ENCODE measurements at regions of chr11 and their contacts with region 1.

Region 1: DNA sequence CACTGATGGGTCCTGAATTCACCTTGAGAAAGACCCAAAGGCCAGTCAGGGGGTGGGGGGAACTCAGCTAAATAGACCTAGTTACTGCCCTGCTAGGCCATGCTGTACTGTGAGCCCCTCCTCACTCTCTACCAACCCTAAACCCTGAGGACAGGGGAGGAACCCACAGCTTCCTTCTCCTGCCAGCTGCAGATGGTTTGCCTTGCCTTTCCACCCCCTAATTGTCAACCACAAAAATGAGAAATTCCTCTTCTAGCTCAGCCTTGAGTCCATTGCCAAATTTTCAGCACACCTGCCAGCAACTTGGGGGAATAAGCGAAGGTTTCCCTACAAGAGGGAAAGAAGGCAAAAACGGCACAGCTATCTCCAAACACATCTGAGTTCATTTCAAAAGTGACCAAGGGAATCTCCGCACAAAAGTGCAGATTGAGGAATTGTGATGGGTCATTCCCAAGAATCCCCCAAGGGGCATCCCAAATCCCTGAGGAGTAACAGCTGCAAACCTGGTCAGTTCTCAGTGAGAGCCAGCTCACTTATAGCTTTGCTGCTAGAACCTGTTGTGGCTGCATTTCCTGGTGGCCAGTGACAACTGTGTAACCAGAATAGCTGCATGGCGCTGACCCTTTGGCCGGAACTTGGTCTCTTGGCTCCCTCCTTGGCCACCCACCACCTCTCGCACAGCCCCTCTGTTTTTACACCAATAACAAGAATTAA is 2.4 kb upstream of the TTC36 start:
- DNase-seq: peak; percentile 48 to 78 (median 74)
- H3K4me3 ChIP-seq: peak overlapping the region in 3 of 7 experiments; percentile 32 to 43 (median 38)
- H3K27ac ChIP-seq: peak overlapping the region in 1 of 2 experiments; percentile 6
- H3K4me1 ChIP-seq: peaks cover 13 to 71% (median 57%) of the 10 kb centered on the region in 4 experiments
- H3K27me3 ChIP-seq: no peaks in the 10 kb centered on the region

Region 2: DNA sequence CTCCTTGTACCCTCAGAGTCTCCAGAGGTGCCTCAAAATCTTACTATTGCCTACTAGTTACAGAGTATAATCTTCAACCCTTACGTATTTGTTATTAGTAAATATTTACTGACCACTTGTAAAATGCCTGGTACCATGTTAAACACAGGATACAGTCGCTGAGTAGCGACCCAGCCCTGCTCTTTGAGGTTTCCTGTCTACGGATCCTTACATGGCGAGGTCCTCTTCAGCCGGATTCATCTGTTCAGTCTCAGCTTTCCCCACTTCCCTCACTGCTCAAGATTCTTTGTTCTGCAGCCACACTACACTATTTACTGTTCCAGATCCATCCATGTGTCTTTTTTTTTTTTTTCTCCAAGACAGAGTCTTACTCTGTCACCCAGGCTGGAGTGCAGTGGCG is 10.8 kb before region 1 on chr11:
- CTCF ChIA-PET with region 1: interaction called, 3 read pairs
- POLR2A ChIA-PET with region 1: interaction called, 13 read pairs
- DNase-seq: peak; percentile 71 to 96 (median 95)
- H3K4me3 ChIP-seq: peak overlapping the region in 2 of 7 experiments; percentile 26 to 40
- H3K27ac ChIP-seq: peak overlapping the region; percentile 81 to 85
- H3K4me1 ChIP-seq: peaks cover 0 to 31% (median 18%) of the 10 kb centered on the region in 4 experiments
- H3K27me3 ChIP-seq: no peaks in the 10 kb centered on the region